Right ventricle myocardium superior (tissue), 1 donor: ENCODE measurements at regions of chr2 and their contacts with region 1.

Region 1: GRCh38 chr2:164430166-164430783 is 191.0 kb downstream of the GRB14 start:
- DNase-seq: no peak
- ATAC-seq: peak; percentile 63

Region 2: GRCh38 chr2:163182764-163183354 is 1247.4 kb before region 1 on chr2:
- intact Hi-C with region 1: loop called (anchors 10 kb)
- DNase-seq: no peak
- ATAC-seq: no peak

Region 3: GRCh38 chr2:164514231-164514907 is 84.1 kb after region 1 on chr2:
- intact Hi-C with region 1: no loop called
- DNase-seq: no peak
- ATAC-seq: no peak